Activated naive CD4-positive, alpha-beta T cell treated with anti-CD3 and anti-CD28 coated beads for 36 hours (primary cell): ENCODE measurements at regions of chr1 and their contacts with region 1.

Region 1: GRCh38 chr1:26279456-26280332 is at the start of gene SH3BGRL3:
- DNase-seq: peak; percentile 86
- H3K4me3 Mint-ChIP-seq: peak within 1 kb of the TSS; percentile 81
- H3K27ac Mint-ChIP-seq: peak within 1 kb of the TSS; percentile 87
- H3K4me1 Mint-ChIP-seq: peaks cover 87% of the 10 kb centered on the region
- H3K27me3 Mint-ChIP-seq: no peaks in the 10 kb centered on the region
- total RNA-seq, gene SH3BGRL3: 130 to 132 TPM

Region 2: DNA sequence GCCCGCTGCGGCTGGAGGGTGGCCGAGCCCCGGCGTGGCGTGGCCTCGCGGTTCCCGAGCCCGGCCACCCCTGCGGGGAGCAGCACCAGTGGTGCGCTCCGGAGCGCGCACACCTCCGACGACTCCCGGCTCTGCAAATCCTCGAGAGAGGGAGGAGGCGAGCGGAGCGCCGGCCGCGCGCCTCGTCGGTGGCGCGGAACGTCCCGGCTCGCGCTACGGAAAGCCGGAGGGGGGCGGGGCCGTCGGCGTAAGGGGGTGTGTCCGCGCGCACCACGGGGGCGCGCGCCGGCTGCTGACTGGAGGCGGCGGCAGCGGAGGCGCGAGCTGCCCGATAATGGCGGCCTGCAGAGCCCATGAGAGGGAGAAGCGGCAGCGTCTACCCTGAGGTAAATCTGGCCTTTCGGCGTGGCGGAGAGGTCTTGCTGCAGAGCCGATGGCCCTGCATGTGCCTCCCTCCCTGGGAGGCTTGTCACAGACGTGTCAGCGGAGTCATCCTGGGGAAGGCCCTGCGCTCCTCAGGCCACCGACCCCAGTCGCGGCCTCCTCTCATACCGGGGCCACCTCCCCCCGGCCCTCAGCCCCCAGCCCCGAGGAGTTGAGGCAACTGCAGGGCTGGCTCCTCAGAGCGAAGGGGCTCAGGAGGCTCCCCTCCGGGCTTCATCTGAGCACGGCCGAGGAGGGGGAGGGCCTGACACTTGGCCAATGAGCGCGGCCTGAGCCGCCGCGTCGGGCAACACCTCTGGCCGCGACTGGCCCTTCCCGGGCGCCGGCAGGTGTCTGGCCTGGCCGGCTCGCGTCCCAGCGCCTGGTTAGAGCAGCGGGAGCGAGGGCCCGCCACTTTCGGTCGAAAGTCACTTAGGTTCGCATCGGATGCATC is 167.9 kb before region 1 on chr1 and contains the start of gene PDIK1L:
- CTCF ChIA-PET with region 1: no interaction called
- intact Hi-C with region 1: loop called (anchors 5 kb)
- DNase-seq: peak; percentile 94
- H3K4me3 Mint-ChIP-seq: peak within 1 kb of the TSS; percentile 96
- H3K27ac Mint-ChIP-seq: peak within 1 kb of the TSS; percentile 90
- H3K4me1 Mint-ChIP-seq: peaks cover 28% of the 10 kb centered on the region
- H3K27me3 Mint-ChIP-seq: no peaks in the 10 kb centered on the region
- total RNA-seq, gene PDIK1L: 20.5 to 21.4 TPM

Region 3: GRCh38 chr1:26126321-26127084 is 153.2 kb before region 1 on chr1:
- CTCF ChIA-PET with region 1: no interaction called
- intact Hi-C with region 1: loop called (anchors 5 kb)
- DNase-seq: peak; percentile 65
- H3K4me3 Mint-ChIP-seq: peak overlapping the region; percentile 67
- H3K27ac Mint-ChIP-seq: peak overlapping the region; percentile 95
- H3K4me1 Mint-ChIP-seq: peaks cover 51% of the 10 kb centered on the region
- H3K27me3 Mint-ChIP-seq: no peaks in the 10 kb centered on the region

Region 4: DNA sequence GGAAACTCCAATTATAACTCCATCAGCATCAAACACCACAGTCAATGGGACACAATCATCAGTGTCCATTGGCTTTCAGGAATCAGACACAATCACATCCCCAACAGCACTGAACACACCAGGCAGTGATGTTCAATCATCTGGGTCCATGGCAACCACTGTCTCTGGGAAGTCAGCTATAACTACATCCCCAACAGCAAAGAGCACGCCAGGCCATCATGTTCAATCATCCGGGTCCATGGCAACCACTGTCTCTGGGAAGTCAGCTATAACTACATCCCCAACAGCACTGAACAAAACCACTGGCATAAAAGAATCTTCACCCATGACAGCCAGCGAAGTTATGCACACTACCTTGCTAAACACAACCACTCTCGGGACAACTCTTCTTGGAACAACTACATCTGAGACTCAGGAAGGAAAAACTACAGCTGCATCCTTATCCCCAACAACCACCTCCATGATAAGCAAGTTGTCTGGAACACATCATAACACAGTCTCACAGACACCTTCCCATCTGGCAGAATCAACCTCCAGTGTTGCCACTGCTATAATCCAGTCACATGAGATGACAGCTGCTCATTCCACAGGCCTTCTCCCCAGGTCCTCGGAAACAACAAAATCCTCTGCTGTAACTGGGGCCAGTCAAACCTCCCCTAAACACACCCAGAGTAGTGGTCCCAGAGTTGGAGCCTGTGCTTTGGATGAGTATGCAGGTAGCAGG is 69.4 kb before region 1 on chr1:
- CTCF ChIA-PET with region 1: no interaction called
- intact Hi-C with region 1: no loop called
- DNase-seq: no peak
- H3K4me3 Mint-ChIP-seq: no peak overlapping the region
- H3K27ac Mint-ChIP-seq: no peak overlapping the region
- H3K4me1 Mint-ChIP-seq: no peaks in the 10 kb centered on the region
- H3K27me3 Mint-ChIP-seq: no peaks in the 10 kb centered on the region

Region 5: GRCh38 chr1:26233903-26234643 is 45.6 kb before region 1 on chr1 and contains the start of gene CEP85:
- CTCF ChIA-PET with region 1: interaction called, 13 read pairs
- intact Hi-C with region 1: loop called (anchors 2 kb)
- DNase-seq: peak; percentile 99
- H3K4me3 Mint-ChIP-seq: peak within 1 kb of the TSS; percentile 94
- H3K27ac Mint-ChIP-seq: peak within 1 kb of the TSS; percentile 90
- H3K4me1 Mint-ChIP-seq: peaks cover 31% of the 10 kb centered on the region
- H3K27me3 Mint-ChIP-seq: no peaks in the 10 kb centered on the region
- total RNA-seq, gene CEP85: 45.7 to 47.0 TPM

Region 6: DNA sequence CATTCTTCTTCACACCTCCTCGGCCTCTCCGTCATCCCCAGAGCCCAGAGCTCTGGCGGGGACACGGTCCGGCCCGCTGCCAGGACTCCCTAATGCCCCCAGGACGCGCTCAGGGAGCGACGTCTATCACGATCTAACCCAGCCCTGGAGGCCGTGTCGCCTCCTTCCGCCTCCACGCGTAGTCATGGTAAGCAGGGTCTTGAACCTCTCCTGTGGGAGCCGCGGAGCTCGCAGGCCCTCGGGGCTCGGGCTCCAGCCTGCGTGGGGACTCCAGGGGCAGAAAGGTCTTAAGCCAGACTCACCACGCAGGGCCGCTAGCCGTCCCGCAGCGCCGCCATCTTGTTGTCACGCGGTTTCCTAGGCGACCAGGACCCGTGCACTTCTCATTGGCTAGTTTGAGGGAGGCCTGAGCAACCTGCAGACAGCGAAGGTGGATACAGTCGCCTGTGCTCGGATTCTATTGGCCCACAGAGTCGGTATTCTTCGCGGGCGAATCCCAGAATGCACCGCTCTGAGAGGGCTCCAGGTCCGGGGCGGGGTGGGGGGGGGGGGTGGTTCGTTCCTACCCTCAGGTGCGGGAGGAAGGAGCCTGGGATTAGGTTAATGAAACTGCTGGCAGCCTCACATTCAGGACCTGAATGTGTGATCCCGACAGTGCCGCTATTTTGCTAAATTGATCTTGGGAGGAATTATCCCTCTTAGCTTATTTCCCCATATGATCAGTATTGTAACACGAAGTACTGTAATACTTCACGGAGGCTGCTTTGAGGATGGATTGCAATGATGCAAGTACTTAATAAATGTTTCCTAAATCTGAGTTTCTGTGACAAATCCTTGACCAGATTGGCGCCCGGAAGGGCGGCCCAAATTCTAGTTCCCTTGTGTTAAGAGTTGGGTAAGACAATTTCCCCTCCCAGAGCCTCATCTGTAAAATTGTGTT is 26.9 kb after region 1 on chr1 and contains the start of gene UBXN11:
- CTCF ChIA-PET with region 1: interaction called, 210 read pairs
- intact Hi-C with region 1: no loop called
- DNase-seq: peak; percentile 98
- H3K4me3 Mint-ChIP-seq: peak within 1 kb of the TSS; percentile 99
- H3K27ac Mint-ChIP-seq: peak within 1 kb of the TSS; percentile 97
- H3K4me1 Mint-ChIP-seq: peaks cover 38% of the 10 kb centered on the region
- H3K27me3 Mint-ChIP-seq: no peaks in the 10 kb centered on the region
- total RNA-seq, gene UBXN11: 26.4 to 26.9 TPM

Region 7: GRCh38 chr1:26363549-26364448 is 84.1 kb after region 1 on chr1:
- CTCF ChIA-PET with region 1: interaction called, 7 read pairs
- intact Hi-C with region 1: loop called (anchors 2 kb)
- DNase-seq: peak; percentile 90
- H3K4me3 Mint-ChIP-seq: no peak overlapping the region
- H3K27ac Mint-ChIP-seq: no peak overlapping the region
- H3K4me1 Mint-ChIP-seq: peaks cover 32% of the 10 kb centered on the region
- H3K27me3 Mint-ChIP-seq: peaks cover 6% of the 10 kb centered on the region

Region 8: DNA sequence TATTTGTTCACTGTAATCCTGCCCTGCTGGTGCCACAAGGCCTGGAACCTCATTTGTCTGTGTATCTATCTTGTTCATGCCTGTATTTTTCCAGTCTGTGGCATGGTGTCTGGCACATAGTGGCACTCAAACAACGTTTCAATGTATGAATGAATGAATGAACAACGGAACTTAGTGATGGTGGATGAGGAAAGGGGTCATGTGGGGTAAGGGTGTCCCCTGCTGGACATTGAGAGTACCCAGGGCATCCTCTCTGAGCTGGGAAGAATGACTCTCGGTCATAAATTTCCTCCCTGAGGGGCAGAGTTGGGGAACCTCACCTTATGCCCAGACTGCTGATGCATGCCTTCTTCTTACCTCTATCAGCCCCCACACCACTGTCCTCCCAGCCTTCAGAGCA is 111.8 kb after region 1 on chr1:
- CTCF ChIA-PET with region 1: interaction called, 9 read pairs
- intact Hi-C with region 1: loop called (anchors 1 kb)
- DNase-seq: peak; percentile 59
- H3K4me3 Mint-ChIP-seq: no peak overlapping the region
- H3K27ac Mint-ChIP-seq: no peak overlapping the region
- H3K4me1 Mint-ChIP-seq: peaks cover 19% of the 10 kb centered on the region
- H3K27me3 Mint-ChIP-seq: no peaks in the 10 kb centered on the region

Region 9: DNA sequence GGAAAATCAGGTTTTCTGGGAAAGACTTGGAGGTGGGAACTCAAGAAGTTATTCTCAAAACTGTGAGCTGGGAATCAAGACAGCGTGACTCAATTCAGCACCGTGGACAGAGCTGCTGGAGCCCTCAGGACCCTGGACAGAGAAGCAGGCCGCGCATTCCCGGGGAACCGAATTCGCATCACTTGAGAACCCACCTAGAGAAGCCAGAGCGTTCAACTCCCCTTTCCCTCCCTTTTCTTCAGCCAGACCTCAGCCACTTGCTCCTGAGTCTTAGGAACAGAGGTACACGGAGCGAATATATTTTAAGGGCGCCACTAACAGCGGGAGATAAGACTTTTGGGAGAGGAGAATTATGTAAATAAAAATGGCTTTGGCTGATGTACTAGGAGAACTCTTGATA is 128.9 kb after region 1 on chr1:
- CTCF ChIA-PET with region 1: no interaction called
- intact Hi-C with region 1: no loop called
- DNase-seq: peak; percentile 86
- H3K4me3 Mint-ChIP-seq: no peak overlapping the region
- H3K27ac Mint-ChIP-seq: no peak overlapping the region
- H3K4me1 Mint-ChIP-seq: peaks cover 26% of the 10 kb centered on the region
- H3K27me3 Mint-ChIP-seq: peaks cover 46% of the 10 kb centered on the region